PC-9 (cell line): ENCODE measurements at regions of chr6 and their contacts with region 1.

Region 1: GRCh38 chr6:108526739-108527174 is 34.0 kb upstream of the FOXO3 start:
- DNase-seq: peak in 1 of 2 experiments; percentile 42
- H3K4me3 ChIP-seq: no peak overlapping the region
- H3K27ac ChIP-seq: no peak overlapping the region
- H3K4me1 ChIP-seq: no peaks in the 10 kb centered on the region
- H3K27me3 ChIP-seq: no peaks in the 10 kb centered on the region
- CTCF ChIP-seq: peak; percentile 91

Region 2: GRCh38 chr6:107695061-107695720 is 831.6 kb before region 1 on chr6:
- CTCF ChIA-PET with region 1: interaction called, 13 read pairs
- POLR2A ChIA-PET with region 1: no interaction called
- intact Hi-C with region 1: no loop called
- DNase-seq: no peak
- H3K4me3 ChIP-seq: no peak overlapping the region
- H3K27ac ChIP-seq: no peak overlapping the region
- H3K4me1 ChIP-seq: no peaks in the 10 kb centered on the region
- H3K27me3 ChIP-seq: no peaks in the 10 kb centered on the region
- CTCF ChIP-seq: no peak

Region 3: DNA sequence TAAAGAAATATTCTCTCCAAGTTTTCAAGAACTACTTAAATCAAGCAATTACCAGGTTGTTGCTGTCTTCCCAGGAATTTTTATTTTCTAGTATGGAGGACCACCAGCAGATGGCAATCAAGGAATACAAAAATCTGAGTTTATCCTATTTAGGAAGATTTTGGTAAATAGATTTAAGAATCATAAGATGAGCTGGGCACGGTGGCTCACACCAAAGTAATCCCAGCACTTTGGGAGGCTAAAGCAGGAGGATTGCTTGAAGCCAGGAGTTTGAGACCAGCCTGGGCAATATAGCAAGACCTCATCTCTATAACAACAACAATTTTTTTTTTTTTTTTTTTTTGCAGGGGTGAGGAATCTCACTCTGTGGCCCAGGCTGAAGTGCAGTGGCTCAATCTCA is 549.5 kb before region 1 on chr6:
- CTCF ChIA-PET with region 1: no interaction called
- POLR2A ChIA-PET with region 1: no interaction called
- intact Hi-C with region 1: loop called (anchors 1 kb)
- DNase-seq: no peak
- H3K4me3 ChIP-seq: no peak overlapping the region
- H3K27ac ChIP-seq: no peak overlapping the region
- H3K4me1 ChIP-seq: peaks cover 13% of the 10 kb centered on the region
- H3K27me3 ChIP-seq: no peaks in the 10 kb centered on the region
- CTCF ChIP-seq: peak; percentile 78

Region 4: DNA sequence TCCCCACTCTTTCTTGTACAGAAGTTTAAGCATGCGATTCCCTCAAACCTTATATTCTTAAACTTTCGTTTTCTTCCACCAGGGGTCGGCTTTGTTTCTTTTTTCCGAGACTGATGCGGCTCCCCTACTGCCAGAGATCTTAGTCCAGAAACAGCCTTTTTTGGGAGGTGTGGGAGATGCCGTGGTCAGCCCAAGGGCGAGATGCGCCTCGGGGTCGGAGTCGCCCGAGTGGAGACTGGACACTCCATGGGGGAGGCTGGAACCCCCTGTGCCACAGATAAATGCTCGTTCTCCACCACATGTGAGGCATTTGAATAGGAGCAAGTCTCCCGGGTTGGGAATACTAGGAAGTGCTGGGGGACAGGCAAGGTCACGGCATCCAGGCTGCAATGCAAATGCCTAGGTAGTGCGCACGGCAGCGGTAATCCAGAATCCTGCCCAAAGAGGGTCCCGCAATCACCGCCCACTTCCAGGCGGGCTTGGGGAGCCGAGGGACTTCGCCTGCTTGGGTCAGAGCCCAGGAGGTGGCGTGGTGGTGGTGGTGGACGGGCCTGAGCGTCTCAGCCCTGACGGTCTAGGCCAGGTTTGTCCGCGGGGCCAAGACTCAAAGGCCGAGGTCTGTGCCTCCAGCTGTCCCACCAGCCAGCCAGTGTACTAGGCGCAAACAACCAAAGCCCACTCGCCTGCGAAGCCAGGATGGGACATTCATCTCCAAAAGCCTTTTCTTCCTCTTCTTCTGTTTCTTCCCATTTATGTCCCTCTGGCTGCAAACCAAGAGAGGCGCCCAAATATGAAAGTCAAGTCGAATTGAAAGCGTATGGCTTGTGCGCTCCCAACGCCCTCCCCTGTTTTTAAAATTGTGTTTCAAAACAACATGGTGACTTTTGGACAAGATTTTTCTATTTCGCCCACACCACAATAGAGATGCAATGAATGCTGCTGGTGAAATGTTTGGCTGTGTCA is 412.9 kb before region 1 on chr6:
- CTCF ChIA-PET with region 1: no interaction called
- POLR2A ChIA-PET with region 1: no interaction called
- intact Hi-C with region 1: loop called (anchors 1 kb)
- DNase-seq: peak; percentile 23 to 59
- H3K4me3 ChIP-seq: 0 out of 2 replicates have a peak overlapping the region, but pooled peaks have one; percentile 8
- H3K27ac ChIP-seq: no peak overlapping the region
- H3K4me1 ChIP-seq: no peaks in the 10 kb centered on the region
- H3K27me3 ChIP-seq: peaks cover 5% of the 10 kb centered on the region; the same call in 1 of the 2 replicates
- CTCF ChIP-seq: peak; percentile 87

Region 5: GRCh38 chr6:108174371-108175175 is 352.2 kb before region 1 on chr6:
- CTCF ChIA-PET with region 1: no interaction called
- POLR2A ChIA-PET with region 1: no interaction called
- intact Hi-C with region 1: loop called (anchors 10 kb)
- DNase-seq: no peak
- H3K4me3 ChIP-seq: no peak overlapping the region
- H3K27ac ChIP-seq: no peak overlapping the region
- H3K4me1 ChIP-seq: no peaks in the 10 kb centered on the region
- H3K27me3 ChIP-seq: no peaks in the 10 kb centered on the region
- CTCF ChIP-seq: no peak

Region 6: DNA sequence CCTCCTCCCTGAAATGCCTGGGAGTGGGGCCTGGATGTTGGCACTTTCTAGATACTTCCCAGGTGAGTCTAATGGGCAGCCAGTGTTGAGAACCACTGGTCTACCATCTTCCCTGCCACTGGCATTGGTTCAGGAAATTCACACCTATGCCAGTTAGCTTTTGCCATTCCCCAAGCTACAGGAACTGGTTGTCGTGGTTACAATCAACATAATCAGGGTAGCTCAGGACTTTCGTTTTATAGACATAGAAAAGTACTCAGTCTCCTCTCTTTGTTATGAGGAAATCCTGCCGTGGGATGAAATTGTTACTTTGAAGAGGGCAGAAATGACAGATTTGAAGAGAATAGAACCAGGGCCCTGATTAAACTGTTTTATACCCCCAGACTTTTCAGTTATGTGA is 94.0 kb before region 1 on chr6:
- CTCF ChIA-PET with region 1: no interaction called
- POLR2A ChIA-PET with region 1: no interaction called
- intact Hi-C with region 1: no loop called
- DNase-seq: no peak
- H3K4me3 ChIP-seq: no peak overlapping the region
- H3K27ac ChIP-seq: no peak overlapping the region
- H3K4me1 ChIP-seq: no peaks in the 10 kb centered on the region
- H3K27me3 ChIP-seq: no peaks in the 10 kb centered on the region
- CTCF ChIP-seq: no peak

Region 7: DNA sequence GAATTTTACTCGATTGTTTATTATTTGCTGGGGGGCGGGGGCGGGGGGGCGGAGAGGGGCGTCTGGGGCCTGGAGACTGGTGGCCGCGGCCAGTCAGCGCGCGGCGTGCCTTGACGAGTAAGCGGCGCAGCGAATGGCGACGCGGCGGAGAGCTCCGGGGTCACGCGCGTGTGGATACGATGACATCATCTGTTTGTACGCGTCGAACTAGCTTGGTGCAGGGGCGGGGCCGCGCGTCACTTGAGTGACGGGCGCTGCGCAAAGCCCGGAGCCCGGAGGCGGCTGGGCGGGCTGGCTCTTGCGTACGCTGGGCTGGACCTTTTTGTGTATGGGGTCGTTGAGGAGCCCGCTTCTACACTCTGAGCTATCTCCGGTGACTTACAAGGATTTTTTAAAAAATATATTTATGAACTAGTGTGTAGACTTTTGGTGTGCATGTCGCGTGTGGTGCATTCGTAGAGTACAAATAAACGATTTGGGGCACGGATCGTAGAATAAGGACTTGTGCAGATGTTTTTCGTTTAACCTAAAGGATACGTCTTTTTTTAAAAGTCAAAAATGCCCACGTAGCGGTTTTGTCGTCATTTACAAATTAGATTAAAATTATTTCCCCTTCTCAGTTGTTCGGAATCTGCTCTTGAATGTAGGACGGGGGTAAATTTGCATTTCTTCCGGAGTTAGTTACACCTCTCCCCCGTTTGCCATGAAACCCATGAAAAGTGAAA is 31.8 kb after region 1 on chr6:
- CTCF ChIA-PET with region 1: no interaction called
- POLR2A ChIA-PET with region 1: no interaction called
- intact Hi-C with region 1: no loop called
- DNase-seq: peak; percentile 95 to 96
- H3K4me3 ChIP-seq: peak overlapping the region; percentile 99
- H3K27ac ChIP-seq: peak overlapping the region; percentile 83
- H3K4me1 ChIP-seq: peaks cover 12% of the 10 kb centered on the region
- H3K27me3 ChIP-seq: no peaks in the 10 kb centered on the region
- CTCF ChIP-seq: no peak